Tibial artery (tissue), 4 donors: ENCODE measurements at regions of chr1 and their contacts with region 1.

Region 1: DNA sequence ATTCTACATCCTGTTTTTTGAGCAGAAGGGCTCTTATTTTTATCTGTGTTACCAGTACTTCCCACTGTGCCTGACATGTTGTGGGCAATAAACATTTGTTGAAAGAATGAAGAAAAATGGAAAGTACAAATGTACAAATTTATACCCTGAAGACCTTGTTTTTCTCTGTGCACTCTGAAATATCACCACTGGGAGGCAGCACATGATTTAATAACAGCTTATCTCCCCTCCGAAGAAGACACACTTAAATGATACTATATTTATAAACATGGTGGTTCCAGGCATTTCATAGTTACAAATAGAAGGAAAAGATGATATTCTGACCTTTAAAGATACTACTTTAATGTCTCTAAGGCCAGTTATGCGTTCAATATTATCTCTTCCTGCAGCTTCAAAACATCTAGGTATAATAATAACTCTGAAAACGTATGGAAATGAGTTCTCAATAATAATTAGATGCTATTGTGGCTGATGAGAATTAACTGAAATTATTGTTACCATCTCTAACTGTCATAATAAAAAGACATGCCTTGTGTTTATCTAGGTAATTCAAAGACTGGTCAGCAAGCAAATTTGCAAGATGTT is 12.8 kb downstream of the DYNLT5 start:
- DNase-seq: peak in 1 of 2 donors; percentile 48
- H3K4me3 ChIP-seq: no peak overlapping the region
- H3K27ac ChIP-seq: no peak overlapping the region
- H3K4me1 ChIP-seq: no peaks in the 10 kb centered on the region
- H3K27me3 ChIP-seq: no peaks in the 10 kb centered on the region
- CTCF ChIP-seq: peak; percentile 65 to 68

Region 2: GRCh38 chr1:67149179-67149770 is 384.2 kb after region 1 on chr1:
- intact Hi-C with region 1: loop called (anchors 10 kb)
- DNase-seq: peak; percentile 62 to 77
- H3K4me3 ChIP-seq: no peak overlapping the region
- H3K27ac ChIP-seq: no peak overlapping the region
- H3K4me1 ChIP-seq: peaks cover 0 to 9% (median 4%) of the 10 kb centered on the region in 4 donors
- H3K27me3 ChIP-seq: no peaks in the 10 kb centered on the region
- CTCF ChIP-seq: peak; percentile 89 to 91

Region 3: GRCh38 chr1:67489643-67490042 is 724.6 kb after region 1 on chr1:
- intact Hi-C with region 1: loop called (anchors 10 kb)
- DNase-seq: no peak
- H3K4me3 ChIP-seq: no peak overlapping the region
- H3K27ac ChIP-seq: no peak overlapping the region
- H3K4me1 ChIP-seq: no peaks in the 10 kb centered on the region
- H3K27me3 ChIP-seq: no peaks in the 10 kb centered on the region
- CTCF ChIP-seq: peak in 1 of 2 experiments; percentile 18